HepG2 (cell line): ENCODE measurements at regions of chr1 and their contacts with region 1.

Region 1: GRCh38 chr1:111030590-111030989 is 66.9 kb upstream of the LRIF1 start:
- DNase-seq: peak; percentile 65
- ATAC-seq: peak; percentile 87
- H3K4me3 ChIP-seq: no peak overlapping the region
- H3K27ac ChIP-seq: no peak overlapping the region
- H3K4me1 ChIP-seq: 0 out of 2 replicates have a peak, but pooled peaks cover 6% of the 10 kb centered on the region
- H3K27me3 ChIP-seq: no peaks in the 10 kb centered on the region
- CTCF ChIP-seq: peak; percentile 79
- EP300 ChIP-seq: no peak
- POLR2A ChIP-seq: no peak
- RAD21 ChIP-seq: no peak

Region 2: DNA sequence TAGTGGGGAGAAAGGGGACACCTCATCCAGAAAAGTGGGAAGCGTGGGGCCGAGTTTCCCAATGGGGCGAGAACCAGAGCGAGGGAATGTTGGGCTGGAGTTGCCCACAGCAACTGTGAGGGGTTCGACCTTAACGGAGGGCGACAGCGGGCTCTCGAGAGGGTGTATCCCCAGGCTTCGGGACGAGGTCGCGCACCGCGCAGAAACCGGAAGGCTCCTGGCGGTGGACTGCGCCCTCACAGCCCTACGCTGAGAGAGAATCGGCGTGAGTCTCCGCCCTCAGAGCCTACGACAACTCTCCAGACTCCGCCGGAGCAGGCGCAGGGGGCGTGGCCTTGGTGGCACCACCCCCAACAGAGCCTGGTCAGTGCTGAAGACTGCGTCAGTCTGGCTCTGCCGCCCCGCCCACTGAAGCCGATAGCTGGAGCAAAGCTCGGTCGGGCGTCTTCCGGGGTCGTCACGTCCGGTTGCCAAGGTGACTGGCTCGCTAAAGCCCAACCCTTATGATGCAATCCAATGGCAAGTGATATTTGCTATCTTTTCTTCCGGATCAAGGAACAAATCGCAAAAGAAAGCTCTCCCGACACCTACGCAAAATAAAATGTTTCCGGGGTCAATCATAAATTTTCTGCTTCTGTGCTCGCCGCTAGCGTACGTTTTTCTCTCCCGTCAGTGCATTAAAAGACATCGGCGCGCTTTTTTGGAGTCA is 66.7 kb before region 1 on chr1 and contains the start of gene LRIF1:
- CTCF ChIA-PET with region 1: no interaction called
- POLR2A ChIA-PET with region 1: interaction called, 3 read pairs
- in situ Hi-C with region 1: no loop called
- intact Hi-C with region 1: loop called (anchors 5 kb)
- DNase-seq: peak; percentile 99
- ATAC-seq: peak; percentile 99
- H3K4me3 ChIP-seq: peak within 1 kb of the TSS; percentile 79 to 92 (median 90)
- H3K27ac ChIP-seq: peak within 1 kb of the TSS; percentile 99
- H3K4me1 ChIP-seq: peaks cover 33% of the 10 kb centered on the region
- H3K27me3 ChIP-seq: no peaks in the 10 kb centered on the region; a peak in 1 of 5 replicates
- CTCF ChIP-seq: peak; percentile 47
- EP300 ChIP-seq: peak; percentile 3 to 7; a peak in 1 of 4 replicates
- POLR2A ChIP-seq: peak; percentile 98 to 100
- RAD21 ChIP-seq: no peak
- total RNA-seq, gene LRIF1: 42.4 and 67.4 TPM in 2 replicates

Region 3: GRCh38 chr1:111089638-111090037 is 59.0 kb after region 1 on chr1:
- CTCF ChIA-PET with region 1: no interaction called
- POLR2A ChIA-PET with region 1: no interaction called
- in situ Hi-C with region 1: no loop called
- intact Hi-C with region 1: loop called (anchors 5 kb)
- DNase-seq: no peak
- ATAC-seq: no peak
- H3K4me3 ChIP-seq: no peak overlapping the region
- H3K27ac ChIP-seq: no peak overlapping the region
- H3K4me1 ChIP-seq: no peaks in the 10 kb centered on the region
- H3K27me3 ChIP-seq: no peaks in the 10 kb centered on the region
- CTCF ChIP-seq: no peak
- EP300 ChIP-seq: no peak
- POLR2A ChIP-seq: no peak
- RAD21 ChIP-seq: no peak

Region 4: DNA sequence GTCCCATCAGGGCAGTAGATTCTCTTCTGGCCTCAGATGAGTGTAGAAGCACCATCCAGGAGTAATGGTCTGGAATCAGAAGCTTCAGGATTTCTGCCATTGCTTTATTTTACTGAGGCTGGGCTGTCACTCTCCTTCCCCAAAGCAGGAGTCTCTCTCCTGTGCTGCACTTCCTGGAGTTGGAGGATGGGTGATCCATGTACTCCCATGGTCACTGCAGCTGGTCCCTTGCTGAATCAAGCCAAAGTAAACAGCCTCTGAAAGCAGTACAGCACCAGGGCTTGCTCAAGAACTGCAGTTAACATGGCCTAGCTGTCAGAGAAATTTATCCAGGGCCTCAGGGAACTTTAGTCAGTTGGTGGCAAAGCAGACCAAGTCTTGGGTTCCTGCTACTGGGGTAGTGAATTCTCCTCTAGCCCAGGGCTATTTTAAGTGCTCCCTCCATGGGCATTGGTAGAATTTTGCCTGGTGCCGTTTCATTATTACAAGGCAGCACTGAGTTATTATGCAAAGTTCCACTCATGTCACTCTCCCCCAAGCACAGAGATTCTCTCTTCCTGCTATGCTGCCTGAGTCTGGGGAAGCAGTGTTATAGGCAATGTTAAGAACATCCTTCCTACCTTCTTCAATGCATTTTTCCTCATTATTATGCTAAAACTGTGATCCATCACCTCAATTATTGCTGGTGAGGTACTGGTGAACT is 79.8 kb after region 1 on chr1:
- CTCF ChIA-PET with region 1: no interaction called
- POLR2A ChIA-PET with region 1: no interaction called
- in situ Hi-C with region 1: no loop called
- intact Hi-C with region 1: loop called (anchors 5 kb)
- DNase-seq: peak; percentile 77
- ATAC-seq: peak; percentile 100
- H3K4me3 ChIP-seq: no peak overlapping the region
- H3K27ac ChIP-seq: peak overlapping the region; percentile 47
- H3K4me1 ChIP-seq: peaks cover 25% of the 10 kb centered on the region
- H3K27me3 ChIP-seq: no peaks in the 10 kb centered on the region
- CTCF ChIP-seq: 0 out of 2 replicates have a peak, but pooled peaks have one; percentile 12
- EP300 ChIP-seq: no peak; a peak in 1 of 4 replicates
- POLR2A ChIP-seq: no peak
- RAD21 ChIP-seq: no peak

Region 5: GRCh38 chr1:111139956-111140679 is 109.5 kb after region 1 on chr1 and contains the starts of genes CEPT1 and DRAM2:
- CTCF ChIA-PET with region 1: no interaction called
- POLR2A ChIA-PET with region 1: no interaction called
- in situ Hi-C with region 1: no loop called
- intact Hi-C with region 1: loop called (anchors 5 kb)
- DNase-seq: peak; percentile 88
- ATAC-seq: peak; percentile 80
- H3K4me3 ChIP-seq: peak within 1 kb of the TSS; percentile 82 to 90 (median 84)
- H3K27ac ChIP-seq: peak within 1 kb of the TSS; percentile 96
- H3K4me1 ChIP-seq: peaks cover 45% of the 10 kb centered on the region
- H3K27me3 ChIP-seq: no peaks in the 10 kb centered on the region
- CTCF ChIP-seq: peak; percentile 33
- EP300 ChIP-seq: no peak
- POLR2A ChIP-seq: peak; percentile 72 to 77
- RAD21 ChIP-seq: 0 out of 2 replicates have a peak, but pooled peaks have one; percentile 9
- total RNA-seq, gene CEPT1: 33.6 and 48.2 TPM in 2 replicates
- total RNA-seq, gene DRAM2: 22.9 and 33.2 TPM in 2 replicates

Region 6: DNA sequence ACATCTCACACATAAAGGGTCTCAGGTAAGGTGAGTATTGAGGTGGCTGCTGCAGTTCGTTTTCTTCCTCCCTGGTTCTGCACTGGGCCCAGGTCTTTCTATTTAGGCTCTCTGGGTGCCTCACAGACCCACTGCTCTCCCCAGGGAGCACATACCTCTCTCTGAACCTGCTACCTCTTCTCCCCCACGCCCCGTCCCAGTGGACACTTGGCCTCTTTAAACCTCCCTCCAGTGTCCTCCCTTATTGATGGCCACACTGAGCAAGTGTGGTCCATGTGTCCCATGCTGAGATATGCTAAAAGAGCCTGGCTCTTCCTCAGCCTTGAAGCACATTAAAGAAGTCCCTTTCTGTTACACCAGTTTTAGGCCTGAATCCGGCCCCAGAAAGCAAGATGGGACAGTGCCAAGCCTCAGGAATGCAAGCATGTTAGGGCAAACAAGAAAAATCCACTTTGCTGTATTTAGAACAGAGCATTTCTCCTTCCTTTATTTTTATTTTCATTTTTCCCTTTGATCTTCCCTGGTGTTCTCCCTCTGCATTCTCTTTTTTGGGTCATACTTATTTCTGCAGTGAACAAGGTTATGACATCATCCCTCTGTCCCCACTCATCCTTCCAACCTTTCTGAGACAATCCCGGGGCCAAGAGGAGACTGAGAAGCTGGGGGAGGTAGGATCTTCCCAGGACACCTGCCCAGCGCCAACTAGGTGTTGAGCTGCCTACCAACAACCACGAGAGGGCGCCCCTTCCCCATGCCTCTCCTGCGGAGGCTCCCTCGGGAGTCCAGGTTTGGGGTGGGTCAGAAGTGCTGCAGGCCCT is 191.9 kb after region 1 on chr1:
- CTCF ChIA-PET with region 1: no interaction called
- POLR2A ChIA-PET with region 1: no interaction called
- in situ Hi-C with region 1: no loop called
- intact Hi-C with region 1: loop called (anchors 5 kb)
- DNase-seq: peak; percentile 62
- ATAC-seq: peak; percentile 97
- H3K4me3 ChIP-seq: peak overlapping the region in 2 of 3 experiments; percentile 8 to 39; a peak in 3 of 6 replicates
- H3K27ac ChIP-seq: no peak overlapping the region
- H3K4me1 ChIP-seq: peaks cover 52% of the 10 kb centered on the region
- H3K27me3 ChIP-seq: no peaks in the 10 kb centered on the region; a peak in 1 of 5 replicates
- CTCF ChIP-seq: peak; percentile 97
- EP300 ChIP-seq: no peak
- POLR2A ChIP-seq: no peak
- RAD21 ChIP-seq: peak; percentile 97

Region 7: DNA sequence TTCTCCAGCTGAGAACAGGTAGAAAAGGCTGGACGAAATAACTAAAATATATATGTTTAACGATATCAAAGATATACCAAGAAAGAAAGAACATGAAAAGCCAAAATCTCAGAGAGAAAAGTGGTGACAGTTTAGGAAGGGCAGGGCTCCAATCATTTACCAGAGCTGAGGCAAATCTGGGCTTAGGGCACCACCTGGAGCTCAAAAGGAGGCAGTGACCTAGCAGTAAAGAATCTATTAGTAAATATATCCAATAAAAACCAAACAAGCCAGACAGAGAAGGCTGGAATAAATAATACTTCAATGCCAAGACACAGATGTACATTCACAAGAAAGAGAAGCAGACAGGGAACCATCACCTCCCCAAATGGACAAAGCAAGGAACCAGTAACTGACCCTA is 303.6 kb after region 1 on chr1:
- CTCF ChIA-PET with region 1: interaction called, 6 read pairs
- POLR2A ChIA-PET with region 1: no interaction called
- in situ Hi-C with region 1: no loop called
- intact Hi-C with region 1: loop called (anchors 2 kb)
- DNase-seq: peak; percentile 50
- ATAC-seq: peak; percentile 83
- H3K4me3 ChIP-seq: no peak overlapping the region
- H3K27ac ChIP-seq: no peak overlapping the region
- H3K4me1 ChIP-seq: peaks cover 8% of the 10 kb centered on the region
- H3K27me3 ChIP-seq: no peaks in the 10 kb centered on the region; a peak in 1 of 5 replicates
- CTCF ChIP-seq: peak; percentile 84
- EP300 ChIP-seq: no peak
- POLR2A ChIP-seq: no peak
- RAD21 ChIP-seq: peak; percentile 88